Ascending aorta (tissue), 2 donors: ENCODE measurements at regions of chr20 and their contacts with region 1.

Region 1: GRCh38 chr20:57351042-57351783 is at the start of gene RAE1:
- DNase-seq: peak; percentile 35 to 94
- H3K4me3 ChIP-seq: peak within 1 kb of the TSS; percentile 90 to 99
- H3K27ac ChIP-seq: peak within 1 kb of the TSS; percentile 86 to 95
- H3K4me1 ChIP-seq: peaks cover 4 to 9% of the 10 kb centered on the region in 2 donors
- H3K27me3 ChIP-seq: no peaks in the 10 kb centered on the region
- CTCF ChIP-seq: no peak
- total RNA-seq, gene RAE1: 9.5 TPM

Region 2: DNA sequence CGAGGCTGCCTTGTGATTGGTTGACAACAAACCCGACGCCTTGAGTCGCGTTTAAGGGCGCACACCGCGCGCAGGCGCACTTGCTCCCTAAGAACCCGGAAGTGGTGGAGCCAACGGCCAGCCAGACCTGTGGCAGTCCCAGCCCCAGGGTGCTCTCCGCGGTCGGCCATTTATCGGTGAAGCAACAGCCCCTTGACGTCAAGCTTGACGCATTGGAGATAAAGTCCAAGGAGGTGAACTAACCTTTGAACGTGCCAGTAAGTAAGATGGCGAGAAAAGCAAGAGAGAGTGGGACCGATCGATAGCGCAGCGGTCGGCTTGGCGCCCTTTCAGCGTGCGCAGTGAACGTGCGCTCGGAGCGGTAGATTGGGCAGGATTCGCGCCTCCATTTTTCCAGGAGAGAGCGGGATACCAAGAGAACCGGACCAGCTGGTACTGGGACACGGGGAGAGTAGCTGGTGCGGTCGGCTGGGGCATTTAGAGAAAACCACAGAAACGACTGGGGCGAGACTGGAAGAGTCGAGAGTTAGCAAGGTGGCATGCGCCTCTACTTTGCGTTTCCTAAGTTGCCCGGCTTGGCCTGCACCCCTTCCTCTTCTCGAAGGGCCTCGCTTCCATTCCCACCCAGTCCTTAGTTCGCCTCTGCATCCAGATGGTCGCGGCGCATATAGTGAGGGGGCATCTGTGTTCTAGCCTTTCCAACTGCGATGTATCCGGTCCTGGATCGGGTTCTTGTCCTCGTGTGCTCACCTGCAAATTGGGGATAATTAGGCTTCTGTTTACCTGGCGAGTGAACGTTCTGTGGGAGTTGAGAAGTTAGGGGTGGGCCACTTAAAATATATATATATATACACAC is 958.7 kb before region 1 on chr20 and contains the start of gene CSTF1:
- intact Hi-C with region 1: loop called (anchors 10 kb)
- DNase-seq: peak; percentile 99 to 100
- H3K4me3 ChIP-seq: peak within 1 kb of the TSS; percentile 63 to 78
- H3K27ac ChIP-seq: peak within 1 kb of the TSS; percentile 87 to 90
- H3K4me1 ChIP-seq: peaks cover 0 to 17% of the 10 kb centered on the region in 2 donors
- H3K27me3 ChIP-seq: no peaks in the 10 kb centered on the region
- CTCF ChIP-seq: no peak
- total RNA-seq, gene CSTF1: 13.7 TPM

Region 3: GRCh38 chr20:56468316-56469082 is 882.7 kb before region 1 on chr20 and contains the start of gene RTF2:
- intact Hi-C with region 1: loop called (anchors 5 kb)
- DNase-seq: peak; percentile 68 to 96
- H3K4me3 ChIP-seq: peak within 1 kb of the TSS; percentile 86 to 90
- H3K27ac ChIP-seq: peak within 1 kb of the TSS; percentile 83 to 91
- H3K4me1 ChIP-seq: peaks cover 0 to 20% of the 10 kb centered on the region in 2 donors
- H3K27me3 ChIP-seq: no peaks in the 10 kb centered on the region
- CTCF ChIP-seq: no peak
- total RNA-seq, gene RTF2: 54.5 TPM

Region 4: DNA sequence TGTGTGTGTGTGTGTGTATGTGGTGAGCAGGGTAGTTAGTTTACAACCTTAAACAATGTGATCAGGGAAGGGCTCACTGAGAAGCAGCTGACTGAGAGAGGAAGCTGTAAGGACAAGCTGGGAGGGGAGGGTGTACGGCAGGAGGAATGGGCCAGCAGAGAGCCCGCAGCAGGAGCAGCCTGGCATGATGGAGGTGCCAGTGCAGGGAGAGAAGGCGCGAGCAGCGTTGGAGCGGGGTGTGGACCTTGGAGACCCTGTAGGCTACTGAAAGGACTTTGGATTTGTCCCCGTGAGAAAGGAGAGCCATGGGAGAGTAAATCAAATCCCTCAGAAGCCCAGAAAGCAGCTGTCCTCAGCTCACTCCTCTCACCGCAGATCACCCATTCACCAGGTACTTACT is 799.6 kb before region 1 on chr20:
- intact Hi-C with region 1: loop called (anchors 2 kb)
- DNase-seq: no peak
- H3K4me3 ChIP-seq: no peak overlapping the region
- H3K27ac ChIP-seq: no peak overlapping the region
- H3K4me1 ChIP-seq: no peaks in the 10 kb centered on the region
- H3K27me3 ChIP-seq: no peaks in the 10 kb centered on the region
- CTCF ChIP-seq: no peak

Region 5: GRCh38 chr20:57089691-57090150 is 261.5 kb before region 1 on chr20:
- intact Hi-C with region 1: loop called (anchors 5 kb)
- DNase-seq: no peak
- H3K4me3 ChIP-seq: no peak overlapping the region
- H3K27ac ChIP-seq: no peak overlapping the region
- H3K4me1 ChIP-seq: no peaks in the 10 kb centered on the region
- H3K27me3 ChIP-seq: no peaks in the 10 kb centered on the region
- CTCF ChIP-seq: peak in 2 of 3 experiments; percentile 19 to 51

Region 6: GRCh38 chr20:57383447-57384347 is 32.5 kb after region 1 on chr20:
- intact Hi-C with region 1: loop called (anchors 1 kb)
- DNase-seq: no peak
- H3K4me3 ChIP-seq: no peak overlapping the region
- H3K27ac ChIP-seq: no peak overlapping the region
- H3K4me1 ChIP-seq: no peaks in the 10 kb centered on the region
- H3K27me3 ChIP-seq: no peaks in the 10 kb centered on the region
- CTCF ChIP-seq: no peak